Activated naive CD4-positive, alpha-beta T cell treated with anti-CD3 and anti-CD28 coated beads, Interleukin-2, amount 10 ng/mL, durations not matched to agents 7 days and 5 days (primary cell): ENCODE measurements at regions of chr5 and their contacts with region 1.

Region 1: GRCh38 chr5:131589510-131590348 is 45.3 kb downstream of the RAPGEF6 start:
- DNase-seq: peak; percentile 33
- H3K4me3 Mint-ChIP-seq: no peak overlapping the region
- H3K27ac Mint-ChIP-seq: no peak overlapping the region
- H3K4me1 Mint-ChIP-seq: peaks cover 35% of the 10 kb centered on the region
- H3K27me3 Mint-ChIP-seq: no peaks in the 10 kb centered on the region

Region 2: GRCh38 chr5:131796793-131797693 is 207.3 kb after region 1 on chr5 and contains the start of gene FNIP1:
- CTCF ChIA-PET with region 1: interaction called, 10 read pairs
- DNase-seq: peak; percentile 99
- H3K4me3 Mint-ChIP-seq: peak within 1 kb of the TSS; percentile 98
- H3K27ac Mint-ChIP-seq: peak within 1 kb of the TSS; percentile 95
- H3K4me1 Mint-ChIP-seq: peaks cover 32% of the 10 kb centered on the region
- H3K27me3 Mint-ChIP-seq: peaks cover 11% of the 10 kb centered on the region

Region 3: DNA sequence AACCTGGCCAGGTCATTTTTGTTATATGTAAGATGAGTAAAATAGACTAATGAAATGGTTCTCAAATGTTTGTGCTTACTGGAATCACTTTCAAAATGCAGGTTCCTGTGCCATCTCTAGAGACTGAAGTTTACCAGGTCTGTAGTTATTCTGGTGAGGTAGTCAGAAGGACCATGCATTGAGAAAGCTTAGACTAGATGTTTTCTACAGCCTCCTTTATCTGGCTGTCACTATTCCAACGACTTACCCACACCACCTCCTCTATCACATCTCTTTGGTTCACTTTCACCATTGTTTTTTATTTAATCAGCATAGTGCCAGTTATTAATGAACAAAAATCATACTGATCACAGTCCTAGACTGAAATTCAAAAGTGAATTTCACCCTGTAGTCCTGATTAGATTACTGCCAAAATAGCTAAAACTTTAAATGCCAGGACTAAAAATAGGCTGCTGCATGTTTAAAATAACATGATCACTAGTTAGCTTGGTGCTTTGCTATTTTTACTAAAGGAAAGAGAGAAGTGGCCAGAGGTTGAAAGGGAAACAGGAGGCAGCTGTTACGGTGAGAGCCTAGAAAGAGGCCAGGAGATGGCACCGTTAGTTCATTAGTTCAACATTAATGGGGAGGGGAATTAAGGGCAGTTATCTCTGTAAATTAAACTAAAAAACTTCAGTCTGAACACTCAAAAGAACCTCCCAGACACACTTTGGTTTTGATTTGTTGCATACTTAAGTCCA is 221.0 kb after region 1 on chr5:
- CTCF ChIA-PET with region 1: interaction called, 16 read pairs
- DNase-seq: peak; percentile 27
- H3K4me3 Mint-ChIP-seq: no peak overlapping the region
- H3K27ac Mint-ChIP-seq: no peak overlapping the region
- H3K4me1 Mint-ChIP-seq: peaks cover 3% of the 10 kb centered on the region
- H3K27me3 Mint-ChIP-seq: peaks cover 5% of the 10 kb centered on the region